Activated CD4-positive, alpha-beta T cell treated with anti-CD3 and anti-CD28 coated beads, Interleukin-2, amount 10 ng/mL, durations not matched to agents 7 days and 5 days (primary cell): ENCODE measurements at regions of chr1 and their contacts with region 1.

Region 1: GRCh38 chr1:11796036-11796828 is 9.5 kb downstream of the MTHFR start:
- DNase-seq: no peak
- H3K4me3 Mint-ChIP-seq: no peak overlapping the region
- H3K27ac Mint-ChIP-seq: no peak overlapping the region
- H3K4me1 Mint-ChIP-seq: peaks cover 2% of the 10 kb centered on the region
- H3K27me3 Mint-ChIP-seq: no peaks in the 10 kb centered on the region

Region 2: GRCh38 chr1:11784993-11785769 is 11.1 kb before region 1 on chr1:
- CTCF ChIA-PET with region 1: interaction called, 13 read pairs
- POLR2A ChIA-PET with region 1: no interaction called
- DNase-seq: peak; percentile 33
- H3K4me3 Mint-ChIP-seq: no peak overlapping the region
- H3K27ac Mint-ChIP-seq: no peak overlapping the region
- H3K4me1 Mint-ChIP-seq: peaks cover 2% of the 10 kb centered on the region
- H3K27me3 Mint-ChIP-seq: no peaks in the 10 kb centered on the region

Region 3: GRCh38 chr1:11807133-11807532 is 10.9 kb after region 1 on chr1:
- CTCF ChIA-PET with region 1: no interaction called
- POLR2A ChIA-PET with region 1: no interaction called
- DNase-seq: no peak
- H3K4me3 Mint-ChIP-seq: peak overlapping the region; percentile 92
- H3K27ac Mint-ChIP-seq: peak overlapping the region; percentile 93
- H3K4me1 Mint-ChIP-seq: peaks cover 61% of the 10 kb centered on the region
- H3K27me3 Mint-ChIP-seq: no peaks in the 10 kb centered on the region